T-cell (primary cell): ENCODE measurements at regions of chr5 and their contacts with region 1.

Region 1: GRCh38 chr5:94389515-94389899 is 228.9 kb downstream of the KIAA0825 start:
- DNase-seq: no peak
- ATAC-seq: no peak
- H3K4me3 ChIP-seq: no peak overlapping the region
- H3K4me3 Mint-ChIP-seq: no peak overlapping the region
- H3K27ac ChIP-seq: no peak overlapping the region
- H3K27ac Mint-ChIP-seq: no peak overlapping the region
- H3K4me1 ChIP-seq: no peaks in the 10 kb centered on the region
- H3K4me1 Mint-ChIP-seq: peaks cover 0 to 3% (median 0%) of the 10 kb centered on the region in 3 donors
- H3K27me3 ChIP-seq: no peaks in the 10 kb centered on the region
- H3K27me3 Mint-ChIP-seq: no peaks in the 10 kb centered on the region

Region 2: GRCh38 chr5:94376672-94377345 is 12.7 kb before region 1 on chr5:
- CTCF ChIA-PET with region 1: interaction called, 4 to 12 read pairs
- POLR2A ChIA-PET with region 1: no interaction called
- DNase-seq: no peak
- ATAC-seq: no peak
- H3K4me3 ChIP-seq: no peak overlapping the region
- H3K4me3 Mint-ChIP-seq: no peak overlapping the region
- H3K27ac ChIP-seq: no peak overlapping the region
- H3K27ac Mint-ChIP-seq: no peak overlapping the region
- H3K4me1 ChIP-seq: no peaks in the 10 kb centered on the region
- H3K4me1 Mint-ChIP-seq: no peaks in the 10 kb centered on the region
- H3K27me3 ChIP-seq: no peaks in the 10 kb centered on the region
- H3K27me3 Mint-ChIP-seq: no peaks in the 10 kb centered on the region